ENCODE measurements at regions of chr9 and their contacts with region 1.

Region 1: DNA sequence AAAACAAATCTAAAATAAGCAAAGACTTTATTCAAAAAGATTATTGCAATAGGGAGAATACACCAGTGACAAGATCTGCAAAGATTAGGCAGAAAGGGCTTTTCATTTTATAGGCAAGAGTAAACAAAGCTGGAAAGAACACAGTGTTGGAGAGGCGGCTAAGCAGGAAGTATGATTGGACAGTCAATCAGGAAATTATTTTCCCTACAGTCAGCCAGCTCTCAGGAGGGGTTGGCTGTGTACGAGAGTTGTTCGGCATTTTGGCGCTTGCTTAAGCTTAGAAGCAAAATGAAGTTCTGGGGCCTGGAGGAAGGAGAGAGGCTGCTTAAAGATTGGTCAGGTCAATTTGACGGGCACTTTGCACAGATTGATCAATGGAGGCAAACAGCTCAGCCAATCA is 1030.5 kb downstream of the TLE4 start:
- DNase-seq: no peak
- ATAC-seq: no peak
- H3K4me3 Mint-ChIP-seq: no peak overlapping the region
- H3K27ac Mint-ChIP-seq: no peak overlapping the region
- H3K4me1 Mint-ChIP-seq: no peaks in the 10 kb centered on the region
- H3K27me3 Mint-ChIP-seq: no peaks in the 10 kb centered on the region

Region 2: DNA sequence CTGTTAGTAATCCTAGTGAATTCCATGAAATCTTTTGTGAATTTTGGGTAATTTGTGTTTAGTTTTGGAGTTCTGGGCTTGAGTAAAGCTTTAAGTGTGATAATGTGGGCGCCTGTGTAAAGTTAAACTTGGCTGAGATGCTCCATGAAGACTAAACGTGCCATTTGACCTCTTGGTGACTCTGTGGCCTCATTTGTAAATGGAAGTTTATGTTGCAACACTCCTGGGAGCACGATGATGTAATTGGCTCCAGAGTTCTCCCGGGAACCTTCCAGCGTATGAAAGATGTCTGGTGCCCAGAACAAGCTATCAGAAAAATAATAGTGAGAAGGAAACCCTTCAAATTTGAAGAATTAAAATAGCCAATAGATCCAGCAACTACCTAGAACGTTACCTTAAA is 49.4 kb before region 1 on chr9:
- CTCF ChIA-PET with region 1: no interaction called
- POLR2A ChIA-PET with region 1: no interaction called
- intact Hi-C with region 1: loop called in 1 of 2 experiments (anchors 1 kb)
- DNase-seq: no peak
- ATAC-seq: no peak
- H3K4me3 Mint-ChIP-seq: no peak overlapping the region
- H3K27ac Mint-ChIP-seq: no peak overlapping the region
- H3K4me1 Mint-ChIP-seq: no peaks in the 10 kb centered on the region
- H3K27me3 Mint-ChIP-seq: no peaks in the 10 kb centered on the region

Region 3: GRCh38 chr9:80771555-80772347 is 169.5 kb after region 1 on chr9:
- CTCF ChIA-PET with region 1: no interaction called
- POLR2A ChIA-PET with region 1: no interaction called
- intact Hi-C with region 1: no loop called
- DNase-seq: no peak
- ATAC-seq: no peak
- H3K4me3 Mint-ChIP-seq: no peak overlapping the region
- H3K27ac Mint-ChIP-seq: no peak overlapping the region
- H3K4me1 Mint-ChIP-seq: no peaks in the 10 kb centered on the region
- H3K27me3 Mint-ChIP-seq: no peaks in the 10 kb centered on the region

Measured in activated CD4-positive, alpha-beta T cell treated with anti-CD3 and anti-CD28 coated beads for 36 hours (primary cell).